Activated CD4-positive, alpha-beta T cell treated with anti-CD3 and anti-CD28 coated beads for 36 hours (primary cell): ENCODE measurements at regions of chr5 and their contacts with region 1.

Region 1: GRCh38 chr5:37424441-37424840 is 45.3 kb downstream of the WDR70 start:
- DNase-seq: no peak
- ATAC-seq: no peak
- H3K4me3 Mint-ChIP-seq: no peak overlapping the region
- H3K27ac Mint-ChIP-seq: no peak overlapping the region
- H3K4me1 Mint-ChIP-seq: peaks cover 9% of the 10 kb centered on the region
- H3K27me3 Mint-ChIP-seq: no peaks in the 10 kb centered on the region

Region 2: GRCh38 chr5:36790838-36791237 is 633.6 kb before region 1 on chr5:
- CTCF ChIA-PET with region 1: no interaction called
- POLR2A ChIA-PET with region 1: no interaction called
- intact Hi-C with region 1: no loop called
- DNase-seq: no peak
- ATAC-seq: no peak
- H3K4me3 Mint-ChIP-seq: no peak overlapping the region
- H3K27ac Mint-ChIP-seq: no peak overlapping the region
- H3K4me1 Mint-ChIP-seq: no peaks in the 10 kb centered on the region
- H3K27me3 Mint-ChIP-seq: no peaks in the 10 kb centered on the region

Region 3: DNA sequence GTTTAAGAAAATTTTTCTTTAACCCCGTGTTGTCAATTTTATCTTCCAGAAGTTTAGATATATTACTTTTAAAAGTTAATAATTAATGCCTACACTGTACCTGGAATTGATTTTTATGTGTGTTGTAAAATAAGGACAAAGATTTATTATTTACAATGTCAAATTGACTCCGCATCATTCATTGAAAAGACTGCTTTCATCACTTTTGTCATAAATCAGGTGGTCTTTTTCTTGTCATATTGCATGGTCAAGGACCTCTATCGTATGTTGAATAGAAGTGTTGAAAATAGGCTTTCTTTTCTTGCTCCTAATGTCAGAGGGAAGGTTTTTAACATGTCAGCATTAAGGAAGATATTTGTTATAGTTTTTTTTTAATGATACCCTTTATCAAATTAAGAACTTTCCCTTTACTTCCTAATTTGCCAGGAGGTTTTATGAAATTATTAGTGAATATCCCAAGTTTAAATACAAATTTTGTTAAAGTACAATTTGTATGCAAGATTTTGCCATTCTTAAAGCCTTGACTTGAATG is 47.3 kb after region 1 on chr5:
- CTCF ChIA-PET with region 1: no interaction called
- POLR2A ChIA-PET with region 1: no interaction called
- intact Hi-C with region 1: no loop called
- DNase-seq: no peak
- ATAC-seq: no peak
- H3K4me3 Mint-ChIP-seq: no peak overlapping the region
- H3K27ac Mint-ChIP-seq: no peak overlapping the region
- H3K4me1 Mint-ChIP-seq: no peaks in the 10 kb centered on the region
- H3K27me3 Mint-ChIP-seq: no peaks in the 10 kb centered on the region

Region 4: GRCh38 chr5:37757980-37758583 is 333.6 kb after region 1 on chr5:
- CTCF ChIA-PET with region 1: no interaction called
- POLR2A ChIA-PET with region 1: no interaction called
- intact Hi-C with region 1: loop called in 1 of 2 experiments (anchors 10 kb)
- DNase-seq: no peak
- ATAC-seq: no peak
- H3K4me3 Mint-ChIP-seq: no peak overlapping the region
- H3K27ac Mint-ChIP-seq: no peak overlapping the region
- H3K4me1 Mint-ChIP-seq: no peaks in the 10 kb centered on the region
- H3K27me3 Mint-ChIP-seq: no peaks in the 10 kb centered on the region